ENCODE measurements at regions of chr11 and their contacts with region 1.

Region 1: DNA sequence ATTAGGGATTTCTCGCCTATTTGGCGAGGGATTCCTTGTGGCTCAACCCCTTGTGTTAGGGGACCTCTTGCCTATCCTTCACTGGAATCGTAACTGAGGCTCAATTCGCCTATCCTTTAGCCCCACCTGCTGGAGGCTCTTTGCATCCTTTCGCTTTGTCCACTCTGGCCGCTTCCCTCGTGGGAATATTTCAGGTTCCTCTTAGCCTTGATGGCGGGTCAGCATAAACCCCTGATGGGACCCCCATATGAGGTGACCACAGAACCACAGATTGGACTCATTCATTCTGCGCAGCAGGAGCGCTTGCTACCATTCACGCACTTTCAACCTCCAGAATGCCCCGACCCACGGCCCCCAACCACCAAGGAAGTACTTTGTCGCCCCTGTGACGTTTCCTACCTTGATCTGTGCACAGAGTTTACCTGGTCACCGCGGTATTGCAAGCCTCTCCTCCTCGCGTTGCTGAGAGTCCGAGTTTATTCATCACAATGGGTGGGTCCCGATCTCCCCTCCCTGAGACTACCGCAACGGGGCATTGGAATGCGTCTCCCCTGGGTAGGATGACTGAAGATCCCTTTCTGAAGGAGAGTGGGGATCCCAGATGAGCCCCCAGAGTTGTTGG is at the start of gene OR52N2:
- DNase-seq: peak; percentile 72
- H3K4me3 ChIP-seq: peak within 1 kb of the TSS; percentile 7 to 50 (median 22)
- H3K27ac ChIP-seq: no peak within 1 kb of the TSS
- H3K4me1 ChIP-seq: peaks cover 7% of the 10 kb centered on the region
- H3K27me3 ChIP-seq: peaks cover 0 to 3% of the 10 kb centered on the region in 2 experiments
- CTCF ChIP-seq: peak; percentile 76 to 77
- POLR2A ChIP-seq: no peak
- total RNA-seq, gene OR52N2: not detected in 2 replicates

Region 2: DNA sequence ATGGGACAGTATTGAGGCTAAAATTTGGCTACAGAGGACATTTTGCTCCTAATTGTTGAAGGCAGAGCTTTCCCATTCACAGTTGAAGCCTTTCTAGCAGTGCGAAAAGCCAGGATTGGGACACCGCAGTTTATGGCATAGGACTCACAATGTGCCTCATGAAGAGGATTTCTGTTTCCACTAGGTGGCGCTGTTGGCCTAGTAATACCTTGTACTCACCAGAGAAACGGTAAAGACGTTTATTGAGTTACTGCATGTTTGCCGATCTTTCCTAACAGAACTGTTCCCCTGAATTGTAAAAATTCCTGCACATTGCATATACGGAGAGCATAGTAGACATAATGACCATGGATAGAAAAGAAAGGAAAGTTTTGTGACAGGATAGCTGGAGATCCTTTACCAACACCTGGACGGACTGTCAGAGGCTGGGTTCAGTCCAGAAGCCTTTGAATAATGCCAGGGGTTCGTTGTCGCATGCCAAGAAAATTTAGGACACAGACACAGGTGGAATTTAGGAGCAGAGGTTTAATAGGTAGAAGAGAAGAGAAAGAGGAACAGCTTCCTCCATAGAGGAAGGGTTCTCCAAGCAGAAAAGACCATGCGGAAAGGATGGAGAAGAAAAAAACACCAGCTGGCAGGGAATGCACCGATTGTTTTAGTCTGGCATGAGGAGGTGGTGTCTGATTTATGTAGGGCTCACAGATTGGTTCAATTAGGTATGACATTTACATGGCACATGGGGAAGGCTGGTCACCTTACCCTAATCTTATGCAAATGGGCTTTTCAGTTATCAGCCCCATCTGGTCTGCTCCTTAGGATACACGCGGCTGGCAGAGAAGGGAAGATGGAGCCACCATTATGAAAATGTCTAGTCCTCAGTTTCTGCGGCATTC is 1182.2 kb before region 1 on chr11:
- CTCF ChIA-PET with region 1: no interaction called
- POLR2A ChIA-PET with region 1: no interaction called
- dilution Hi-C with region 1: no loop called
- intact Hi-C with region 1: loop called (anchors 2 kb)
- DNase-seq: peak; percentile 37
- H3K4me3 ChIP-seq: no peak overlapping the region
- H3K27ac ChIP-seq: no peak overlapping the region
- H3K4me1 ChIP-seq: no peaks in the 10 kb centered on the region
- H3K27me3 ChIP-seq: peaks cover 2% of the 10 kb centered on the region in 2 experiments
- CTCF ChIP-seq: peak; percentile 54 to 63
- POLR2A ChIP-seq: no peak

Region 3: DNA sequence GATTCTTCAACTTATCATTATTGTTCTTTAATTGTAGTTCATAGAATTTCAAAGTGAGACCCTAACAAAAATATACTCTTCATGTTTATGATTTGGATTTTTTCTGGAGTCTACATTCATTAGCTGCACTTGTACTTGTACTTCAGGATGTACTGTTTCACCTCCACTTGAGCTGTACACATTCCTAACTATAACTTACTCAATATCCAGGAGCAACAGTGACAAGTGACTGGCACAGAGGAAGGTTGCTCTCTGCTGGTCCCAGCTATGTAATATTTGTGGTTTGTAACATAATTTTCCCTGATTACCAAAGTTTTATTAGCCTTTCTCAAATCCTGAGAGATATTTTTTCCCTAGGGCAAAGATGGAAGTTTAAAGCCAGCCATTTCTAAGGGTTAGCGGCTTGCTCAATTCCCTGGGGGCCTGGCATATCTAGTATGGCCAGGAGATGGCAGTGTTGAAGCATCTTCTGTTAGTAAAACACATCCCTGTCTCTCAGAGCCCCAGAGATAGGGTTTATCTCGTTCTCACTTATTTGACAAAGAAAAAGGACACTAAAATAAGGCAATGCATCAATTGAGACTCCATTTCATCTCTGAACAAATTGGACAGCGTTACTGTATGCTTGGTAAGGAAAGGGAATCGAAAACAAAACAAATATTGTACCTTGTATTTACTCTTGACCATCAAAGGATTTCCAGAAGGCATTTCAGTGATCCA is 684.6 kb before region 1 on chr11:
- CTCF ChIA-PET with region 1: interaction called, 4 read pairs
- POLR2A ChIA-PET with region 1: no interaction called
- dilution Hi-C with region 1: no loop called
- intact Hi-C with region 1: loop called (anchors 1 kb)
- DNase-seq: peak; percentile 75
- H3K4me3 ChIP-seq: no peak overlapping the region
- H3K27ac ChIP-seq: no peak overlapping the region
- H3K4me1 ChIP-seq: no peaks in the 10 kb centered on the region
- H3K27me3 ChIP-seq: no peaks in the 10 kb centered on the region
- CTCF ChIP-seq: peak; percentile 68 to 80
- POLR2A ChIP-seq: no peak

Region 4: GRCh38 chr11:5380740-5381342 is 427.8 kb before region 1 on chr11:
- CTCF ChIA-PET with region 1: no interaction called
- POLR2A ChIA-PET with region 1: no interaction called
- dilution Hi-C with region 1: no loop called
- intact Hi-C with region 1: loop called (anchors 2 kb)
- DNase-seq: peak; percentile 69
- H3K4me3 ChIP-seq: no peak overlapping the region
- H3K27ac ChIP-seq: no peak overlapping the region
- H3K4me1 ChIP-seq: no peaks in the 10 kb centered on the region
- H3K27me3 ChIP-seq: peaks cover 0 to 2% of the 10 kb centered on the region in 2 experiments
- CTCF ChIP-seq: peak; percentile 67 to 84
- POLR2A ChIP-seq: no peak

Region 5: DNA sequence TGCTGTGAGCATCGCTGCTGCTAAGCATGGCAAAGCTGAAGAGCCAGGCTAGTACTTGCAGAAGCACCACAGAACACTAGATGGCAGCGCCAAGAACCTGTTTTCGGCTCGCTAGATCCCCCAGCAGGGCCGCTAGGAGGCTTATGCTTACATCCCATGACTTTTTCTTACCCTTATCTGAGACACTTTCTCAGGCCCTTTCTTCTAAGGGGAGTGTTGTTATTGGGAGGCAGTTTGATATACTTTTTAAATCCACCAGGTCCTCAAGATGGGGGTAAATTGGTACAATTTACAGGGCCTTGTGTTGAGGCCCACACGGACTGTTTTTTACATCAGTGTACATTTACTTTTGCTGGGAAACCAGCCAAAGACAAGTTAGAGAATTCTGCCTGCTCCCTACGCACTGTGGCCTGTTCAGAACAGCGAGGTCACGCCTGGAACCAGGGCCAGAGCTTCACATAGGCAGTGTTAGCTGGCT is 208.2 kb before region 1 on chr11:
- CTCF ChIA-PET with region 1: interaction called, 9 read pairs
- POLR2A ChIA-PET with region 1: no interaction called
- dilution Hi-C with region 1: no loop called
- intact Hi-C with region 1: loop called (anchors 1 kb)
- DNase-seq: peak; percentile 91
- H3K4me3 ChIP-seq: no peak overlapping the region
- H3K27ac ChIP-seq: peak overlapping the region; percentile 32
- H3K4me1 ChIP-seq: peaks cover 9% of the 10 kb centered on the region
- H3K27me3 ChIP-seq: no peaks in the 10 kb centered on the region
- CTCF ChIP-seq: peak; percentile 79 to 94
- POLR2A ChIP-seq: no peak

Region 6: DNA sequence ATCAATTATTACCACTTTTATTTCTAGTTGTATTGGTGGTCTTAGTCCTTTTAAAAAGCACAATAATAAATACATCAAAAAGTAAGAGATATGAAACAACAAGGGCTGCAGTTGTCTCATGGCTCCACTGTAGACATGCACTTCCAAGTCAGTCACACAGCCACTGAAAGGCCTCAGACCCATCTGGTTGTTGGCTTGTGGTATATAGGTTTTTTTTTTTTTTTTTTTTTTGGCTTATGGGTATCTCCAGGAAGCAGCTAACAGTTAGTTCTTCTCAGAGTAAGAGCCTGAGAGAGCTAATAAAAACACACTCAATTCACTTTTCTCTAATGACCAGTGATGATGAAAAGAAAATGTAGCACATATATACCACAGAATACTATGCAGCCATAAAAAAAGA is 39.1 kb after region 1 on chr11:
- CTCF ChIA-PET with region 1: no interaction called
- POLR2A ChIA-PET with region 1: no interaction called
- dilution Hi-C with region 1: no loop called
- intact Hi-C with region 1: no loop called
- DNase-seq: no peak
- H3K4me3 ChIP-seq: no peak overlapping the region
- H3K27ac ChIP-seq: no peak overlapping the region
- H3K4me1 ChIP-seq: no peaks in the 10 kb centered on the region
- H3K27me3 ChIP-seq: no peaks in the 10 kb centered on the region
- CTCF ChIP-seq: no peak
- POLR2A ChIP-seq: no peak

Region 7: DNA sequence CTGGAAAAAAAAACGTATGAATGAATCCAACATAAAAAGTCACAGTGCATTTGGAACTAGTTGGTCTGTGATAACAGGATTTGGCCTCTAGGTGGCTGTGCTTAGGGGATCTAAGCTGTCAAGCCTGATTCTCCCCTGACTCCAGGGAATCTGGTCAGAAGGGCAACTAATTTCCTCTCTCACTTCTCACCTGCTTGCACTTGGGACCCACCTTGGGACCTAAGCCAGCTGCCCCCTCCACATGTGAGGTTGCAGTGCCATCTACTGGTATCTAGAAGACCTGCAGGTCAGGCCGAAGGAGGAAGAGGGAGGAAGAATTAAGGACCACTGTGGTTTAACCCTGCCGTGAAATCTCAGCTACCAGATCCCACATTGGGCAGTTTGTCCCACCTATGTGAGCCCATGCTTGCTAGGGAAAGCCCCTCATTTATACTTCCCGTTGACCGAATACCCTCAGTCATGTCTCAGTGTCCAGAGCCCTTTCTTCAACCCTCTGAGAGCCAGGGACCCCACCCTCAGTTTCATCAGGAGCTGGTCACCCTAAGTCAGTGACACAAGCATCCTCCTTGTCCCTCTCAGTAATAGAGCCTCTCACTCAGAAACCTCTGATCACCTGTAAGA is 544.9 kb after region 1 on chr11:
- CTCF ChIA-PET with region 1: interaction called, 3 read pairs
- POLR2A ChIA-PET with region 1: no interaction called
- dilution Hi-C with region 1: no loop called
- intact Hi-C with region 1: loop called (anchors 2 kb)
- DNase-seq: peak; percentile 51
- H3K4me3 ChIP-seq: no peak overlapping the region
- H3K27ac ChIP-seq: no peak overlapping the region
- H3K4me1 ChIP-seq: peaks cover 9% of the 10 kb centered on the region
- H3K27me3 ChIP-seq: peaks cover 4 to 8% of the 10 kb centered on the region in 2 experiments
- CTCF ChIP-seq: peak; percentile 84 to 95
- POLR2A ChIP-seq: no peak